ENCODE measurements at regions of chr17 and their contacts with region 1.

Region 1: GRCh38 chr17:71296005-71296404 is 824.8 kb upstream of the SOX9 start:
- DNase-seq: no peak
- H3K4me3 ChIP-seq: no peak overlapping the region
- H3K27ac ChIP-seq: no peak overlapping the region
- H3K4me1 ChIP-seq: no peaks in the 10 kb centered on the region
- H3K27me3 ChIP-seq: no peaks in the 10 kb centered on the region
- CTCF ChIP-seq: no peak
- EP300 ChIP-seq: no peak
- POLR2A ChIP-seq: no peak

Region 2: GRCh38 chr17:70577456-70577855 is 718.5 kb before region 1 on chr17:
- intact Hi-C with region 1: loop called in 1 of 4 experiments (anchors 5 kb)
- DNase-seq: no peak
- H3K4me3 ChIP-seq: no peak overlapping the region
- H3K27ac ChIP-seq: no peak overlapping the region
- H3K4me1 ChIP-seq: no peaks in the 10 kb centered on the region
- H3K27me3 ChIP-seq: no peaks in the 10 kb centered on the region
- CTCF ChIP-seq: no peak
- EP300 ChIP-seq: no peak
- POLR2A ChIP-seq: no peak

Region 3: GRCh38 chr17:71535026-71535720 is 239.2 kb after region 1 on chr17:
- intact Hi-C with region 1: no loop called
- DNase-seq: no peak
- H3K4me3 ChIP-seq: no peak overlapping the region
- H3K27ac ChIP-seq: no peak overlapping the region
- H3K4me1 ChIP-seq: no peaks in the 10 kb centered on the region
- H3K27me3 ChIP-seq: no peaks in the 10 kb centered on the region
- CTCF ChIP-seq: no peak
- EP300 ChIP-seq: no peak
- POLR2A ChIP-seq: no peak

Measured in ovary (tissue), 10 donors.